CD4-positive, alpha-beta memory T cell (primary cell): ENCODE measurements at regions of chr1 and their contacts with region 1.

Region 1: GRCh38 chr1:19811206-19811851 is 3.8 kb downstream of the RNF186 start:
- DNase-seq: peak in 4 of 5 donors; percentile 26 to 40 (median 34)
- H3K4me3 ChIP-seq: no peak overlapping the region
- H3K4me3 Mint-ChIP-seq: no peak overlapping the region
- H3K27ac ChIP-seq: no peak overlapping the region
- H3K27ac Mint-ChIP-seq: no peak overlapping the region
- H3K4me1 ChIP-seq: no peaks in the 10 kb centered on the region
- H3K4me1 Mint-ChIP-seq: no peaks in the 10 kb centered on the region
- H3K27me3 ChIP-seq: no peaks in the 10 kb centered on the region
- H3K27me3 Mint-ChIP-seq: no peaks in the 10 kb centered on the region

Region 2: GRCh38 chr1:19762175-19762779 is 49.1 kb before region 1 on chr1:
- CTCF ChIA-PET with region 1: interaction called, 23 read pairs
- POLR2A ChIA-PET with region 1: no interaction called
- intact Hi-C with region 1: no loop called
- DNase-seq: peak in 3 of 5 donors; percentile 13 to 17 (median 15)
- H3K4me3 ChIP-seq: no peak overlapping the region
- H3K4me3 Mint-ChIP-seq: no peak overlapping the region
- H3K27ac ChIP-seq: no peak overlapping the region
- H3K27ac Mint-ChIP-seq: no peak overlapping the region
- H3K4me1 ChIP-seq: no peaks in the 10 kb centered on the region
- H3K4me1 Mint-ChIP-seq: peaks cover 6 to 8% (median 7%) of the 10 kb centered on the region in 4 donors
- H3K27me3 ChIP-seq: no peaks in the 10 kb centered on the region
- H3K27me3 Mint-ChIP-seq: no peaks in the 10 kb centered on the region

Region 3: GRCh38 chr1:19776287-19776686 is 35.0 kb before region 1 on chr1:
- CTCF ChIA-PET with region 1: no interaction called
- POLR2A ChIA-PET with region 1: no interaction called
- intact Hi-C with region 1: no loop called
- DNase-seq: no peak
- H3K4me3 ChIP-seq: no peak overlapping the region
- H3K4me3 Mint-ChIP-seq: no peak overlapping the region
- H3K27ac ChIP-seq: no peak overlapping the region
- H3K27ac Mint-ChIP-seq: no peak overlapping the region
- H3K4me1 ChIP-seq: no peaks in the 10 kb centered on the region
- H3K4me1 Mint-ChIP-seq: peaks cover 0 to 6% (median 0%) of the 10 kb centered on the region in 4 donors
- H3K27me3 ChIP-seq: no peaks in the 10 kb centered on the region
- H3K27me3 Mint-ChIP-seq: no peaks in the 10 kb centered on the region